Mammary epithelial cell (primary cell): ENCODE measurements at regions of chr9 and their contacts with region 1.

Region 1: GRCh38 chr9:131872006-131872405 is 132.1 kb upstream of the RAPGEF1 start:
- DNase-seq: no peak
- H3K4me3 ChIP-seq: no peak overlapping the region
- H3K27ac ChIP-seq: no peak overlapping the region
- H3K4me1 ChIP-seq: no peaks in the 10 kb centered on the region
- H3K27me3 ChIP-seq: no peaks in the 10 kb centered on the region
- CTCF ChIP-seq: no peak

Region 2: GRCh38 chr9:131739980-131740648 is 131.9 kb before region 1 on chr9 and contains the start of gene RAPGEF1:
- CTCF ChIA-PET with region 1: no interaction called
- dilution Hi-C with region 1: no loop called
- in situ Hi-C with region 1: no loop called
- intact Hi-C with region 1: no loop called
- DNase-seq: no peak
- H3K4me3 ChIP-seq: peak within 1 kb of the TSS; percentile 66 to 83 (median 71)
- H3K27ac ChIP-seq: peak within 1 kb of the TSS; percentile 57
- H3K4me1 ChIP-seq: peaks cover 11% of the 10 kb centered on the region
- H3K27me3 ChIP-seq: no peaks in the 10 kb centered on the region
- CTCF ChIP-seq: peak; percentile 72 to 76
- total RNA-seq, gene RAPGEF1: 41.7 to 51.3 TPM

Region 3: DNA sequence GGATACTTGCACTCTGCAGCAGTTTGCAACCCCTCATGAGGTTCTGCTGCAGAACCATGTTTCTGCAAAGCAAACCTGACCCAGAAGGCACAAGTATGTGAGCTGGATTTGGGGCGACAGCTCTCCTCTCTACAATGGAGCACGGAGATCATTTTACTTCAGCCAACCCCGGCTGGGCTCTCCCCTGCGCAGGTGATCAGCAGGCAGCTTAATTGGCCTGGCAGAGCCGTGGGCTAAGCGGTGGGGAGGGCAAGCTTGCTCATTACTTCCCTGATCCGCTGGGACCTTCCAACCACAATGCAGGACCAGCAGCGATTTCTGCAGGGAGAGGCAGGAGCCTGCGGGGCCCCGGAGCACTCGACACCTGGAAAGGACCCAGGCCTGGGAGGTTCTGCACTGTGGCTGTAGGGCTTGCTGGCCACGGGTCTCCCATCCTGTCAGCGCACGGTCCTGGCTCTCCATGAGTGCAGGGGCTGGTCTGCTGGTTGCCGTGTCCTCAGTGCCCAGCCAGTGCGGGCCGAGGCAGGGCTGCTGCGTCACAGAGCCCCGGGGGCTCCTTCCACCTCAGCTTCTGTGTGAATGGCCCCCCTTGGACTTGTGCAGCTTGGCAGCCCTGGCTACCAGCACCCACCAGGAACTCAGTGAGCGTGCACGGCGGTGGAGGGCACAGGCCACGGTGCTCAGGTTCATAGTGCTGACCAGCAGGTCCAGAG is 80.3 kb before region 1 on chr9:
- CTCF ChIA-PET with region 1: no interaction called
- dilution Hi-C with region 1: loop called (anchors 5 kb)
- in situ Hi-C with region 1: no loop called
- intact Hi-C with region 1: no loop called
- DNase-seq: no peak
- H3K4me3 ChIP-seq: no peak overlapping the region
- H3K27ac ChIP-seq: no peak overlapping the region
- H3K4me1 ChIP-seq: no peaks in the 10 kb centered on the region
- H3K27me3 ChIP-seq: peaks cover 4% of the 10 kb centered on the region
- CTCF ChIP-seq: no peak

Region 4: GRCh38 chr9:131918481-131918880 is 46.5 kb after region 1 on chr9:
- CTCF ChIA-PET with region 1: no interaction called
- dilution Hi-C with region 1: no loop called
- in situ Hi-C with region 1: no loop called
- intact Hi-C with region 1: no loop called
- DNase-seq: no peak
- H3K4me3 ChIP-seq: no peak overlapping the region
- H3K27ac ChIP-seq: no peak overlapping the region
- H3K4me1 ChIP-seq: no peaks in the 10 kb centered on the region
- H3K27me3 ChIP-seq: no peaks in the 10 kb centered on the region
- CTCF ChIP-seq: no peak

Region 5: DNA sequence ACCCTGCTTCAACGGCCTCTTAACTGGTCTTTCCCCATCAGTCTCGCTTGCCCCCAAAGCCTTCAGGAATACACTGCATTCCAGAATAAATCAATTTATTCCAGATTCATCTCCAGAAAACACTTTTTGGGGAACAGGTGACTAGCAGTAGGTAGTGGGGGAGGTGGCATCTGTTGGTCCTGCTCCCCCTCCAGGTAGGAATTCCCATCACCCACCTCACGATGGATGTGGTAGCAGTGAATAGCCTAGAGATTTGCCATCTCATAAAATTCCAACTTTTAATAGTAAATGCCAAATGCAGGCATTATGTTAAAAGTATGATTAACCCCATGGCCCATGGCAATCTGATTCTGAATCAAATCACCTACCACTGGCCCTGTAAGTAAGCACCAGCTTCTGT is 64.9 kb after region 1 on chr9:
- CTCF ChIA-PET with region 1: no interaction called
- dilution Hi-C with region 1: loop called (anchors 5 kb)
- in situ Hi-C with region 1: no loop called
- intact Hi-C with region 1: no loop called
- DNase-seq: no peak
- H3K4me3 ChIP-seq: no peak overlapping the region
- H3K27ac ChIP-seq: no peak overlapping the region
- H3K4me1 ChIP-seq: no peaks in the 10 kb centered on the region
- H3K27me3 ChIP-seq: no peaks in the 10 kb centered on the region
- CTCF ChIP-seq: no peak

Region 6: DNA sequence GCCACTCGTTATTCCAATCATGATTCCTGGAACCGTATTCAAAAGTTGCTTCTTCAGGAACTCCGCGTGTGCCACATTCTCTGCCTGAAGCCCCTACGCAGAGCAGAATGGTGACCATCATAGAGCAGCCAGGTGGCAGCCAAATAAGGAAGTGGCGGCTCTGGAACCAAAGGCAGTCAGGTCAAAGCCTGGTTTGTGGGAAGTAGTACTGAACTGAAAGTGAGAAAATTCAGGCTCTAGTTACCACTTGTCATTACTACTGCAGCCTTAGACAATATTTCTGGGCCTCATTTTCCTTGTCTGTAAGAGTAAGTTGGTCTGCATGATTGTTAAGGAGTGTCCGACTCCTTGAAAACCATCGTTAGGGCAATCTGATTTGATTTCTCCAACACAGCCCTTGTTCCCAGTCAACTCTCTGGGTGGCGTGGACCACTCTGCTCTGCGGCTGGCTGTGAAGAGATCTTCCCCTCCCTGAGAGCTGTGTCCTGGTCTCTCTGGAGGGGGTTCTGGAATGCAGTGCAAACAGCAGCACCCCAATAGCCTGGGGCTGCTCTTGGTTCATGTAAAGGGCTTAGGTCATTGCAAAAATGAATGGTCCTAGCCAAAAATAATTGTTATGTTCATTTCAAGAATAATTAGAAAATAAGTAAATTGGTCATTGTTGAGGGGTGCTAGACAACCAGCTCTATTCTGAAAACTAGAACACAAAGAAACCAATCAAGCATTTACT is 105.3 kb after region 1 on chr9:
- CTCF ChIA-PET with region 1: no interaction called
- dilution Hi-C with region 1: loop called (anchors 5 kb)
- in situ Hi-C with region 1: no loop called
- intact Hi-C with region 1: no loop called
- DNase-seq: no peak
- H3K4me3 ChIP-seq: no peak overlapping the region
- H3K27ac ChIP-seq: no peak overlapping the region
- H3K4me1 ChIP-seq: no peaks in the 10 kb centered on the region
- H3K27me3 ChIP-seq: no peaks in the 10 kb centered on the region
- CTCF ChIP-seq: no peak

Region 7: GRCh38 chr9:132169672-132170392 is 297.8 kb after region 1 on chr9:
- CTCF ChIA-PET with region 1: no interaction called
- dilution Hi-C with region 1: no loop called
- in situ Hi-C with region 1: no loop called
- intact Hi-C with region 1: loop called (anchors 10 kb)
- DNase-seq: peak; percentile 31
- H3K4me3 ChIP-seq: no peak overlapping the region
- H3K27ac ChIP-seq: no peak overlapping the region
- H3K4me1 ChIP-seq: no peaks in the 10 kb centered on the region
- H3K27me3 ChIP-seq: peaks cover 4% of the 10 kb centered on the region
- CTCF ChIP-seq: peak; percentile 74 to 90